IMR-90 (cell line): ENCODE measurements at regions of chr10 and their contacts with region 1.

Region 1: GRCh38 chr10:9709849-9710248 is 1307.8 kb upstream of the CELF2 start:
- DNase-seq: peak; percentile 31
- ATAC-seq: peak; percentile 37
- H3K4me3 ChIP-seq: no peak overlapping the region
- H3K27ac ChIP-seq: no peak overlapping the region
- H3K4me1 ChIP-seq: no peaks in the 10 kb centered on the region
- H3K27me3 ChIP-seq: no peaks in the 10 kb centered on the region
- CTCF ChIP-seq: no peak
- POLR2A ChIP-seq: no peak
- RAD21 ChIP-seq: no peak

Region 2: GRCh38 chr10:8767631-8768030 is 942.2 kb before region 1 on chr10:
- CTCF ChIA-PET with region 1: no interaction called
- POLR2A ChIA-PET with region 1: no interaction called
- dilution Hi-C with region 1: no loop called
- in situ Hi-C with region 1: no loop called
- intact Hi-C with region 1: no loop called
- DNase-seq: no peak
- ATAC-seq: no peak
- H3K4me3 ChIP-seq: no peak overlapping the region
- H3K27ac ChIP-seq: no peak overlapping the region
- H3K4me1 ChIP-seq: no peaks in the 10 kb centered on the region
- H3K27me3 ChIP-seq: no peaks in the 10 kb centered on the region
- CTCF ChIP-seq: no peak
- POLR2A ChIP-seq: no peak
- RAD21 ChIP-seq: no peak

Region 3: DNA sequence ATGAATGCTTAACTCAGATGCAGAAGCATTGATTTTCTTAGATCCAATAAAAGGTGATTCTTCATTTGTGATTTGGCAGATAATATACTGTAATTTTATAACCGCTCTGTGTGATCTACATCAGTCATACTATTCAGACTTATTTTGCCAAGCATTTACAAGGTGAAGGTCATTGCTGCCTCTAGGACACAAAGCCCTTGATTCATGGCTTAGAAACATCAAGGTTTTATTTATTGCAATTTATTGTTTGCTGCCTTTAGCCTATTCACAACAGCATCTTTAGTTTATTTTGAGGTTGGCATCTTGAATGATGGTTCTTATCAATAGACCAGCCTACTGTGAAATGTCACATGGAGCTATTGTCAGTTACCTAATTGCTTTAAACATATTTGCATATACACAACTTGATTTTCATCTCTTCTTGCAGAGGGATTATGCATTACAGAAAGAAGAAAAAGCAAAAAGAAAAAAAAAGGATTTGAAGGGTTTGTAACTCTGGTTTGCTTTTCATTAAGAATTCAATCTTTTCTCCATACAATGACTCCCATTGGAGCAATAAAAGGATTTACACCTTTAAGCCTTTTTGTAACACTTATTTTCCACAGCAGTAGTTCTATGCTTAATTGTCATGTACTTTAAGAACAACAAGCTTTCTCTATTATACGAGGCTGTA is 63.8 kb before region 1 on chr10:
- CTCF ChIA-PET with region 1: no interaction called
- POLR2A ChIA-PET with region 1: no interaction called
- dilution Hi-C with region 1: no loop called
- in situ Hi-C with region 1: no loop called
- intact Hi-C with region 1: loop called (anchors 5 kb)
- DNase-seq: no peak
- ATAC-seq: no peak
- H3K4me3 ChIP-seq: no peak overlapping the region
- H3K27ac ChIP-seq: no peak overlapping the region
- H3K4me1 ChIP-seq: no peaks in the 10 kb centered on the region
- H3K27me3 ChIP-seq: no peaks in the 10 kb centered on the region
- CTCF ChIP-seq: no peak
- POLR2A ChIP-seq: no peak
- RAD21 ChIP-seq: no peak

Region 4: DNA sequence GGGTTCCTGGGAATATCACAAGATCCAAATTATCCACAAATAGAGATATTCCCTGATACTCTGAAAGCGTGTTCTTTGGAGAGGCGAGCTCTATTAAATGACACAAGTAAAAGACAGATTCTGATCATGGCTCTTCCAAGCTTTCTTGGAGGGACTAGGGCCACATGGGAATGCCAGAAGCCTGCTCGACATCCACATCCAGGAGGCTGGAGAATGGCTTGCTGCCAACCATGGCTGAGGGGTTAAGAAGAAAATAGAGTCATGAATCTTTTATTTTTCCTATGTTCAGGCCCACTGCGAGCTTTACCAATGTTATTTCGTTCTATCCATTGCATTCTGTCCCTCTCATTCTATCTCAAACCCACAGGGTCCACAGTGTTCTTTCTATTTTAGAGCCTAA is 289.8 kb after region 1 on chr10:
- CTCF ChIA-PET with region 1: no interaction called
- POLR2A ChIA-PET with region 1: no interaction called
- dilution Hi-C with region 1: no loop called
- in situ Hi-C with region 1: no loop called
- intact Hi-C with region 1: no loop called
- DNase-seq: no peak
- ATAC-seq: no peak
- H3K4me3 ChIP-seq: no peak overlapping the region
- H3K27ac ChIP-seq: no peak overlapping the region
- H3K4me1 ChIP-seq: no peaks in the 10 kb centered on the region
- H3K27me3 ChIP-seq: no peaks in the 10 kb centered on the region
- CTCF ChIP-seq: no peak
- POLR2A ChIP-seq: no peak
- RAD21 ChIP-seq: no peak